GM18951 (cell line): ENCODE measurements at regions of chr14 and their contacts with region 1.

Region 1: DNA sequence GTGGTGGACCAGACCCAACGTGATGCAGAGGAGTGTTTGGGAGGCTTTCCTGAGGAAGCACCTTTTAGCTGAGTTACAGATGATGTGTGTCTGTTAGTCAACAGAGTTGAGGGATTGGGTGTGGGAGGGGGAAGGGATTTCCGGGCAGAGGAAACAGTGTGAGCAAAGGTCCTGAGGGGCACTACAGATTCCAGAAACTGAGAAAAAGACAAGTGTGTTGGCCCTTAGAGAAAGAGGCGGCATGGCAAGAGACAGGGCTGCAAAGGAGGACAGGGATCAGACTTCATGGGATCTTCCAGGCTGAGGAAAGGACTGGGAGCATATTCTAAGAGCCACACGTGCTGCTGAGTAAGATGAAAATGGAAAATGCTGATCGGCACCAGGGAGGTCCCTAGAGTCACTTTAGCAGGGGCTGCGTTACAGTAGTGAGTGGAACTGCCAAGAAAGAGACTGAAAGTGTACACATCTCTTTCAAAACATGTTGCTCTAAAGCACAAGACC is 9.4 kb upstream of the RPS6KL1 start:
- POLR2A ChIP-seq: no peak

Region 2: GRCh38 chr14:73825551-73826188 is 1106.8 kb before region 1 on chr14:
- in situ Hi-C with region 1: no loop called
- POLR2A ChIP-seq: no peak

Region 3: GRCh38 chr14:75088574-75089373 is 156.3 kb after region 1 on chr14:
- in situ Hi-C with region 1: loop called (anchors 10 kb)
- POLR2A ChIP-seq: no peak